ENCODE measurements at regions of chr7 and their contacts with region 1.

Region 1: DNA sequence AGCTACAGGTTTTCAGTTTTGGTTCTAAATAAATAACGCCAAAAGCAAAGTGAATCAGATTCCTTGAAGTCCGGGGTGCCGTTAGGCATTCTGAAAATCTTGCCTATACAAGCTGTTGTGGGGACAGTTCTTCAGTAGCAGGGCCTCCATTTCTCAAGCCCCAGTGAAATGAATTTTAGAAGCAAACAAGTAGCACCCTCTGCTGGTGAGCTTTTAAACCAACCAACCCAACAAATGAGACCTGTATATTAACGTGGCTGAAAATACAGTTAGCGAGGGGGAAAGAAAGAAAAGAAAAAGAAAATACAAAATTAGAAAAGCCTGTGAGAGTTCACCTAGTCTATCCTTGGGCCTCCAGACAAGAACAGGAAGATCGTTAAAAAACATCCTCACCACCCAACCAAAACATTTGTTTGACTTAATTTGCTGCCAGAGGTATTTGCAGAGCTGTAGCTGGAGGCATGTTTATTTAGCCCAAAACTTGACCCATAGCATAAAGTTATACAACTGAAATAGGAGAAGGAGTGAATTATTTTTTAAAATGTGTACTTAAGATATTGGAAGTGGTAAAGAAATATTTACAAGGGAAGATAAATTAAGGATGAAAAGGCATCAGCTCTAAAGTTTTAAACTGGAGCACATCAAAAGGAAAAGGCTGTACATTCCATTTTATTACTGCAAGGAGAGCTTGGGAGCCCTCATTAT is 98.9 kb downstream of the DYNC1I1 start:
- DNase-seq: no peak
- ATAC-seq: peak in 1 of 2 donors; percentile 71
- H3K4me3 ChIP-seq: no peak overlapping the region
- H3K27ac ChIP-seq: no peak overlapping the region
- H3K4me1 ChIP-seq: peaks cover 5 to 10% of the 10 kb centered on the region in 2 donors
- H3K27me3 ChIP-seq: no peaks in the 10 kb centered on the region
- CTCF ChIP-seq: peak; percentile 29 to 56 (median 34)
- POLR2A ChIP-seq: no peak

Region 2: GRCh38 chr7:95511716-95512260 is 359.4 kb before region 1 on chr7:
- in situ Hi-C with region 1: loop called in 1 of 4 experiments (anchors 25 kb)
- intact Hi-C with region 1: no loop called
- DNase-seq: peak; percentile 42 to 66
- ATAC-seq: peak; percentile 93 to 98
- H3K4me3 ChIP-seq: peak overlapping the region in 3 of 4 donors; percentile 22 to 40 (median 28)
- H3K27ac ChIP-seq: peak overlapping the region in 1 of 4 donors; percentile 32
- H3K4me1 ChIP-seq: peaks cover 0 to 4% of the 10 kb centered on the region in 2 donors
- H3K27me3 ChIP-seq: no peaks in the 10 kb centered on the region
- CTCF ChIP-seq: peak; percentile 63 to 94 (median 85)
- POLR2A ChIP-seq: no peak

Region 3: GRCh38 chr7:95723592-95724180 is 147.5 kb before region 1 on chr7:
- in situ Hi-C with region 1: loop called in 2 of 4 experiments (anchors 10 kb)
- intact Hi-C with region 1: loop called (anchors 2 kb)
- DNase-seq: no peak
- ATAC-seq: peak in 1 of 2 donors; percentile 60
- H3K4me3 ChIP-seq: no peak overlapping the region
- H3K27ac ChIP-seq: no peak overlapping the region
- H3K4me1 ChIP-seq: no peaks in the 10 kb centered on the region
- H3K27me3 ChIP-seq: no peaks in the 10 kb centered on the region
- CTCF ChIP-seq: peak in 2 of 5 experiments; percentile 25 to 32
- POLR2A ChIP-seq: no peak

Region 4: GRCh38 chr7:95927756-95928155 is 56.5 kb after region 1 on chr7:
- in situ Hi-C with region 1: no loop called
- intact Hi-C with region 1: no loop called
- DNase-seq: no peak
- ATAC-seq: no peak
- H3K4me3 ChIP-seq: no peak overlapping the region
- H3K27ac ChIP-seq: no peak overlapping the region
- H3K4me1 ChIP-seq: peaks cover 0 to 9% of the 10 kb centered on the region in 2 donors
- H3K27me3 ChIP-seq: no peaks in the 10 kb centered on the region
- CTCF ChIP-seq: no peak
- POLR2A ChIP-seq: no peak